ENCODE measurements at regions of chr12 and their contacts with region 1.

Region 1: GRCh38 chr12:92928962-92929915 is at the start of gene EEA1:
- DNase-seq: peak; percentile 88 to 96 (median 92)
- ATAC-seq: peak; percentile 84 to 92 (median 85)
- H3K4me3 ChIP-seq: peak within 1 kb of the TSS; percentile 79 to 87
- H3K4me3 Mint-ChIP-seq: peak within 1 kb of the TSS; percentile 83 to 88 (median 88)
- H3K27ac ChIP-seq: peak within 1 kb of the TSS; percentile 93
- H3K27ac Mint-ChIP-seq: peak within 1 kb of the TSS; percentile 89 to 95
- H3K4me1 ChIP-seq: peaks cover 14 to 22% of the 10 kb centered on the region in 2 experiments
- H3K4me1 Mint-ChIP-seq: peaks cover 36 to 41% (median 38%) of the 10 kb centered on the region in 3 donors
- H3K27me3 ChIP-seq: no peaks in the 10 kb centered on the region
- H3K27me3 Mint-ChIP-seq: no peaks in the 10 kb centered on the region
- total RNA-seq, gene EEA1: 21.4 to 29.5 (median 23.5) TPM

Region 2: GRCh38 chr12:92827836-92828431 is 101.3 kb before region 1 on chr12:
- CTCF ChIA-PET with region 1: interaction called, 10 to 12 read pairs
- POLR2A ChIA-PET with region 1: no interaction called
- DNase-seq: peak in 31 of 35 experiments; percentile 3 to 62 (median 28)
- ATAC-seq: peak in 1 of 4 experiments; percentile 54
- H3K4me3 ChIP-seq: no peak overlapping the region
- H3K4me3 Mint-ChIP-seq: no peak overlapping the region
- H3K27ac ChIP-seq: no peak overlapping the region
- H3K27ac Mint-ChIP-seq: no peak overlapping the region
- H3K4me1 ChIP-seq: no peaks in the 10 kb centered on the region
- H3K4me1 Mint-ChIP-seq: peaks cover 4 to 7% (median 4%) of the 10 kb centered on the region in 3 donors
- H3K27me3 ChIP-seq: no peaks in the 10 kb centered on the region
- H3K27me3 Mint-ChIP-seq: no peaks in the 10 kb centered on the region

Region 3: GRCh38 chr12:92908108-92908507 is 21.1 kb before region 1 on chr12:
- CTCF ChIA-PET with region 1: interaction called, 4 to 10 read pairs
- POLR2A ChIA-PET with region 1: interaction called, 4 read pairs
- DNase-seq: peak in 8 of 35 experiments; percentile 1 to 60 (median 12)
- ATAC-seq: peak; percentile 80 to 94 (median 89)
- H3K4me3 ChIP-seq: no peak overlapping the region
- H3K4me3 Mint-ChIP-seq: peak overlapping the region; percentile 15 to 63 (median 37)
- H3K27ac ChIP-seq: no peak overlapping the region
- H3K27ac Mint-ChIP-seq: peak overlapping the region; percentile 40 to 74
- H3K4me1 ChIP-seq: peaks cover 19 to 25% of the 10 kb centered on the region in 2 experiments
- H3K4me1 Mint-ChIP-seq: peaks cover 61 to 69% (median 65%) of the 10 kb centered on the region in 3 donors
- H3K27me3 ChIP-seq: no peaks in the 10 kb centered on the region
- H3K27me3 Mint-ChIP-seq: no peaks in the 10 kb centered on the region

Region 4: DNA sequence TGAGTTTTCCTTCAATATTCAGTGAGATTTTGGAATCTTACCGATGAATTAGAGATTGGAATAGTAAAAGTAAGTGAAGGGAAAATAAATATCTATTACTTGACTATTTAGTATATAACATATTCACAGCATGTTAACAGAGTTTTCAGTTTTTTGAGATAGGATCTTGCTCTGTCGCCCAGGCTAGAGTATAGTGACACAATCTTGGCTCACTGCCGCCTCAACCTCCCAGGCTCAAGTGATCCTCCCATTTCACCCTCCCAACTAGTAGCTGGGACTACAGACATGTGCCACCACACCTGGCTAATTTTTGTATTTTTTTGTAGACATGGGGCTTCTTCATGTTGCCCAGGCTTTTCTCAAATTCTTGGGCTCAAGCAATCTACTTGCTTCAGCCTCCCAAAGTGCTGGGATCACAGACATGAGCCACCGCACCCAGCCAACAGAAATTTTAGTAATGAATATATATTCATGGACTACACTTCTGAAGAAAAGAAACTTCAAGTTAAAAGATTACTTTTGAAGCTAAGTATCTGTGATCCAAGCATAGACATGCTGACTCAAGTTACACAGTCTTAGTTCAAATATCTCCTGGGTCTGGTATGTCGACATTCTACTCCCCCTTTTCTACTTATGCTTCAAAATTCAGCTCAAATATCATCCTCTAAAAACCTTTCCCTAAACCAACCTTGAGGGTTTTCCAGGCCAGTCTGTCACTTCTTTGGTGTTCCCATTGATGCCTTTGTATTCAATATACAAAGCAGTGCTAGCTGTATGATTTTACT is 498.7 kb after region 1 on chr12:
- CTCF ChIA-PET with region 1: no interaction called
- POLR2A ChIA-PET with region 1: interaction called in 1 of 2 experiments, 12 read pairs
- DNase-seq: no peak
- ATAC-seq: no peak
- H3K4me3 ChIP-seq: no peak overlapping the region
- H3K4me3 Mint-ChIP-seq: peak overlapping the region in 2 of 3 donors; percentile 7 to 53
- H3K27ac ChIP-seq: no peak overlapping the region
- H3K27ac Mint-ChIP-seq: peak overlapping the region; percentile 81 to 85
- H3K4me1 ChIP-seq: peaks cover 30 to 47% of the 10 kb centered on the region in 2 experiments
- H3K4me1 Mint-ChIP-seq: peaks cover 87 to 90% (median 89%) of the 10 kb centered on the region in 3 donors
- H3K27me3 ChIP-seq: no peaks in the 10 kb centered on the region
- H3K27me3 Mint-ChIP-seq: no peaks in the 10 kb centered on the region

Measured in T-cell (primary cell).